ENCODE measurements at regions of chr17 and their contacts with region 1.

Region 1: GRCh38 chr17:6786618-6787017 is 10.6 kb downstream of the FBXO39 start:
- DNase-seq: no peak
- H3K4me3 ChIP-seq: no peak overlapping the region
- H3K27ac ChIP-seq: no peak overlapping the region
- H3K4me1 ChIP-seq: no peaks in the 10 kb centered on the region
- H3K27me3 ChIP-seq: no peaks in the 10 kb centered on the region
- CTCF ChIP-seq: no peak
- POLR2A ChIP-seq: no peak

Region 2: GRCh38 chr17:6868579-6868978 is 82.0 kb after region 1 on chr17:
- intact Hi-C with region 1: no loop called
- DNase-seq: no peak
- H3K4me3 ChIP-seq: no peak overlapping the region
- H3K27ac ChIP-seq: no peak overlapping the region
- H3K4me1 ChIP-seq: no peaks in the 10 kb centered on the region
- H3K27me3 ChIP-seq: no peaks in the 10 kb centered on the region
- CTCF ChIP-seq: no peak
- POLR2A ChIP-seq: no peak

Region 3: DNA sequence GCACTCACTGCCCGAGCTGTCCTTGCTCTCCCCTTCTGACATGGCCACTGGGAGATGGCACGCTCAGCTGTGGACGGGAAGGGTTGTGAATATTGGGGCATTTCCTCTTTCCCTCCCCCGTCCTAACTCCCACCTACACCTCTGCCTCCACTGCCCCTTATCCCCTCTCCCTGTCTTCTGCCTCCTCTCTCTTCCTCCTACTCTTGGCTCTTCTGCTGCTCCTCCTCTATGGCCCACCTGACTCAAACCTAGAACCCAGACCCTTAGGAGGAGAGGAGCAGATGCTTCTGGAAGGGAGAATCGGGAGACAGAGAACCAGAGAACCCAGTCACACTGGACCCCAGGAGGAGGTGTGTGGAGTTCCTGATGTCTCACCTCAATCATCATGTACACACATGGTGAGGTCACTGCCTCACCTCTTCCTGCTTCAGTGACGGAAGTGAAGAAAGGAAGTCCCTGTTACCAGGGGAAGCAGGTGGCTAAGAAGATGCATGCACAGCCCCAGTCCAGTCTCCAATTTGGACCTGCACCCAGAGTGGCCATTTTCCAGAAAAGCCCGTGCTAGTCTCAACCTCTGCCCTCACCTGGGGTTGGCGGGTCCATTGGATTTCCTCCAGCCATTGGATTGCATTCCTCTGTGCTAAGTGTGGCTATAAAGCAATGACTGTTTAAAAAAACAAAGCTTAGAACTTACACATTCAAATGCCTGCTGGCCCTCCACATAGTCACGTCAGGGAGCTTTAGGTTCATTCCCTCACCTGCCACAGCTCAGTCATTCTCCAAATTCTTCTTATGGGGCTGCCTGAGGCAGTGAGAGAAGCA is 1607.0 kb after region 1 on chr17:
- intact Hi-C with region 1: loop called (anchors 10 kb)
- DNase-seq: no peak
- H3K4me3 ChIP-seq: no peak overlapping the region
- H3K27ac ChIP-seq: no peak overlapping the region
- H3K4me1 ChIP-seq: no peaks in the 10 kb centered on the region
- H3K27me3 ChIP-seq: peaks cover 5% of the 10 kb centered on the region
- CTCF ChIP-seq: no peak
- POLR2A ChIP-seq: no peak

Measured in vagina (tissue), 2 donors.